ENCODE measurements at regions of chr14 and their contacts with region 1.

Region 1: GRCh38 chr14:94001501-94002396 is 4.6 kb downstream of the CCDC197 start:
- DNase-seq: peak; percentile 65 to 84 (median 69)
- H3K4me3 ChIP-seq: no peak overlapping the region
- H3K27ac ChIP-seq: no peak overlapping the region
- H3K4me1 ChIP-seq: no peaks in the 10 kb centered on the region
- H3K27me3 ChIP-seq: peaks cover 7% of the 10 kb centered on the region
- CTCF ChIP-seq: peak; percentile 94 to 99 (median 96)
- POLR2A ChIP-seq: no peak

Region 2: DNA sequence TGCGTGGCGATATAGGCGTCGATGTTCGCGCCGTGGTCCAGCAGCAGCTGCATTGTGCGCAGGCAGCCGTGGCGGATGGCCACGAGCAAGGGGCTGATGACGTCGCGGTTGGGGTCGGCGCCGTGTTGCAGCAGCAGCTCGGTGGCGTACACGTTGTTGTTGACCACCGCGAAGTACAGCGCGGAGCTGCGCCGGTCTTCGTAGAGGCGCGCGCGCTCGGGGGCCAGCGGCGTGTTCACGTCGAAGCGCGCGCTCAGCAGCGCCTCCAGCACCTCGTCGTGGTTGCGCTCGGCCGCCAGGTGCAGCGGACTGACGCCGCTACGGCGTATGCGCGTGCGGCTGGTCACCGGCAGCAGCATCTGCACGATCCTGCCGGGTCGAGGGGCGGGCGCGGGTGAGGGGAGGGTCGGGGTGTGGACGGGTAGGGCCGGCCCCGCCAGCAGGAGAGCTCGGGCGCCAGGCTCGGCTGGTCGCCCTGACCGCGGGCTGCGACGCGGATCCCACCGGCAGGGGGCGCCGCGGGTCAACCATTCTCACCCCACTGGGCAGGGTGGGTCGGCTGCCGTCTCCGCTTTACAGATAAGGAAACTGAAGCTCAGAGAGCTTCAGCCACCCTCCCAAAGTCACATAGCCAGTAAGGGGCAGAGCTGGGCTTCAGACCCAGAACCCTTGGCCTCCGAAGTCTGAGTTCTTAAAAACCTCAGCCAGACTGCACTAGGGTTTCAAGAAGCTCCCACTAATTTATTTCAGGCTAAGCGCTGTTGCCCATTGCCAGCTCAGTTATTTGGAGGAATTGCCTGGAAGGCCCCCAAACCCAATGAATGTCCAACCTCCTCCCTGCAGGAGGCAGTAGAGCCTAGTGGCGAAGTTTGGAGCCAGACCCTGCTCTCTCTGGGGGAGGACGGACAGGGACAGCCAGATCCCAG is 62.2 kb before region 1 on chr14:
- intact Hi-C with region 1: loop called (anchors 2 to 5 kb)
- DNase-seq: peak; percentile 75 to 89 (median 84)
- H3K4me3 ChIP-seq: peak overlapping the region in 1 of 4 donors; percentile 54
- H3K27ac ChIP-seq: no peak overlapping the region
- H3K4me1 ChIP-seq: peaks cover 0 to 13% of the 10 kb centered on the region in 2 donors
- H3K27me3 ChIP-seq: peaks cover 17% of the 10 kb centered on the region
- CTCF ChIP-seq: peak; percentile 68 to 94 (median 84)
- POLR2A ChIP-seq: no peak

Region 3: DNA sequence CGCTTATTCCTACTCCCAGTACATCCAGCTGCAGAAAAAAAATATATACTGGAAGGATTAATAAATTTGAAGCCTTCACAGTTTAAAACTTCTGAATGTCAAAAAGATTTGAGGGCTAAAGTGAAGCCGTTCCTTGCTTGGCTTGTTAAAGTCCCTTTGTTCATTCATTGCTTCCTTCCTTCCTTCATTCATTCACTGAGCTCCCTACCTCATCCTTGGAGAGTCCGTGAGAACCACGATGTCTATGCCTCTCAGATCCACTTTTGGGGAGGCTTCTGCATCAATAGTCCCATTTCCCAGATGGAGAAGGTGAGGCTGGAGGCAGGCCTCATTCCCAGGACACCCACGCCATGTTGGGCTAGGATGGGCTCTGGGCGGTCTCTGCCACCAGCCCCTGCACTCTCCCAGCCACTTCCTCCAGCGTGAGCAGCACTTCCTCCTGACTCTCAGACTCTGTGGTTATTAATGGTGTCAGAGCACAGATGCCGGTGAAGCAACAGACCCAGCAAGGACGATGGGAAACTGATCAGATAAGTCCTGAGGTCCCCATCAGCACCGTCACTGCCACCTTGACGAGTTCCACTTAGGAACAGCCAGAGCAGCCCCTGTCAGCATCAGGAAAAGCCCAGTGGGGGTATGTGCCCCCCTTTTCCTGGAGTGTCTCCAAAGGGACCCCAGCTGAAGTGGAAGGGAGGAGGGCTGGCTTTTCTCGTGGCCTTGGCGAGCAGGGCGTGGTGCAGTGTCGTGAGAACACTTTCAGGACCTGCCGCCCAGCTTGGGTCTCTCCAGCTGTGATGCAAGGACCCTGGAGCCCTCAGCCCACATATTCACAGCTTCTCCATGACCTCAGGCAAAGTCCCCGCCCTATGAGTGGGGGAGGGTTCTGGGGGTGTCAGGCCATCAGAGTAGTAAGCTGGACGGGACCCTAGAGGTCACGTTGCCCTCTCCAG is 46.6 kb before region 1 on chr14:
- intact Hi-C with region 1: no loop called
- DNase-seq: peak in 3 of 7 donors; percentile 32 to 59 (median 41)
- H3K4me3 ChIP-seq: no peak overlapping the region
- H3K27ac ChIP-seq: peak overlapping the region in 1 of 5 donors; percentile 29
- H3K4me1 ChIP-seq: peaks cover 9 to 25% of the 10 kb centered on the region in 2 donors
- H3K27me3 ChIP-seq: no peaks in the 10 kb centered on the region
- CTCF ChIP-seq: no peak
- POLR2A ChIP-seq: no peak